ENCODE measurements at regions of chr12 and their contacts with region 1.

Region 1: GRCh38 chr12:117518594-117519270 is 157.3 kb upstream of the NOS1 start:
- DNase-seq: peak; percentile 19
- H3K4me3 Mint-ChIP-seq: no peak overlapping the region
- H3K27ac Mint-ChIP-seq: no peak overlapping the region
- H3K4me1 Mint-ChIP-seq: peaks cover 7% of the 10 kb centered on the region
- H3K27me3 Mint-ChIP-seq: peaks cover 58% of the 10 kb centered on the region
- CTCF ChIP-seq: no peak

Region 2: GRCh38 chr12:117555889-117556288 is 37.2 kb after region 1 on chr12:
- CTCF ChIA-PET with region 1: no interaction called
- intact Hi-C with region 1: loop called (anchors 1 kb)
- DNase-seq: no peak
- H3K4me3 Mint-ChIP-seq: no peak overlapping the region
- H3K27ac Mint-ChIP-seq: no peak overlapping the region
- H3K4me1 Mint-ChIP-seq: no peaks in the 10 kb centered on the region
- H3K27me3 Mint-ChIP-seq: peaks cover 30% of the 10 kb centered on the region
- CTCF ChIP-seq: no peak

Measured in Calu3 (cell line).